ENCODE measurements at regions of chr18 and their contacts with region 1.

Region 1: DNA sequence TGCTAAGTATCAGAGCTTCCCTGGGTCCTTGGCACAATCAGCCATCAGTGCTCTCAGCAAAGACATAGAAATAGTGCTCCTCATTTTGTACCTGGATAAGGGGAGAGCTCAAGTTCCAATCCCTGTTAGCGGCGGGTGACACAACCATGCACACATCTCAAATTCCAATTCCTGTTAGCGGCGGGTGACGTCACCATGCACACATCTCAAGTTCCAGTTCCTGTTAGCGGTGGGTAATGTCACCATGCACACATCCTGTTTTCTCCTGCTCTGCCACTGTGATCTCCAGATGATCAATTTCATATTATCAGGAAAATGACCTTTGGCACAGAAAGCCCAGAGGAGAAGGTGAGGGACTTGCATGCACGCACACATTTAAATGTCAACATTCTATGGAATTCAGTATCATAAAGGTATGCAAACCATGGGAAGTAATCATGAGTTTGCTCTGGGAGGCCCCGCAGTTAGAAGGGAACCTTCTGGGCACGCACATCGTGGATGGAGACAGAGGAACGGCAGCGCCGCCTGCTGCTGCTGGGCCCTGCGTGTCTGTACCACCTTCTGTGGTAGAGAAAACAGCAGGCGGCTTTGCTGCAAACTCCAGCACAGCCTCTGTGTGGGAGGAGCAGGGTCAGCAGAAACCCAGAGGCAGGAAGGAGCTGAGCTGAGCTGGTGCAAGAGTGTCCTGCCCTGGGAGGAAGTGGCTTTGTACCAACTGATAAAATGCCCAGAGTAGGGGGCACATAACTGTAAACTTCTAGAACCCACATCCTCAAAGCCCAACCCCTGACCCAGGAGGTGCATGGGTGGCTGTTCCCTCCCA is 77.8 kb downstream of the MBP start:
- DNase-seq: peak; percentile 73 to 85
- ATAC-seq: peak; percentile 66 to 69
- H3K4me3 ChIP-seq: peak overlapping the region in 1 of 4 donors; percentile 33
- H3K27ac ChIP-seq: peak overlapping the region; percentile 81 to 90 (median 84)
- H3K4me1 ChIP-seq: peaks cover 63 to 64% of the 10 kb centered on the region in 2 donors
- H3K27me3 ChIP-seq: no peaks in the 10 kb centered on the region
- CTCF ChIP-seq: peak; percentile 70 to 83 (median 78)
- POLR2A ChIP-seq: peak in 1 of 2 donors; percentile 13

Region 2: DNA sequence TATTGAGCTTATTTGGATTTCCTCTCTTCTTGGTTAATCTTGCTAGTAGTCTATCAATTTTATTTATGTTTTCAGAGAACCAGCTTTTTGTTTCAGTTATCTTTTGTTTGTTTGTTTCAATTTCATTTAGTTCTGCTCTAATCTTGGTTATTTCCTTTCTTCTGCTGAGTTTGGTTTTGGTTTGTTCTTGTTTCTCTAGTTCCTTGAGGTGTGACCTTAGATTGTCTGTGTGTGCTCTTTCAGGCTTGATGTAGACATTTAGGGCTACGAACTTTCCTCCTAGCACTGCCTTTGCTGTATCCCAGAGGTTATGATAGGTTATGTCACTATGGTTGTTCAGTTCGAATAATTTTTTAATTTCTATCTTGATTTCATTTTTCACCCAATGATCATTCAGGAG is 90.9 kb before region 1 on chr18:
- in situ Hi-C with region 1: no loop called
- intact Hi-C with region 1: no loop called
- DNase-seq: no peak
- ATAC-seq: no peak
- H3K4me3 ChIP-seq: no peak overlapping the region
- H3K27ac ChIP-seq: no peak overlapping the region
- H3K4me1 ChIP-seq: no peaks in the 10 kb centered on the region
- H3K27me3 ChIP-seq: no peaks in the 10 kb centered on the region
- CTCF ChIP-seq: no peak
- POLR2A ChIP-seq: no peak

Region 3: GRCh38 chr18:77000527-77000926 is 54.3 kb before region 1 on chr18:
- in situ Hi-C with region 1: loop called in 3 of 4 experiments (anchors 5 to 10 kb)
- intact Hi-C with region 1: loop called (anchors 1 kb)
- DNase-seq: peak in 1 of 2 donors; percentile 56
- ATAC-seq: peak; percentile 35 to 37
- H3K4me3 ChIP-seq: peak overlapping the region in 2 of 4 donors; percentile 4 to 19
- H3K27ac ChIP-seq: peak overlapping the region in 1 of 4 donors; percentile 50
- H3K4me1 ChIP-seq: peaks cover 0 to 5% of the 10 kb centered on the region in 2 donors
- H3K27me3 ChIP-seq: no peaks in the 10 kb centered on the region
- CTCF ChIP-seq: peak; percentile 92 to 99 (median 95)
- POLR2A ChIP-seq: no peak

Region 4: DNA sequence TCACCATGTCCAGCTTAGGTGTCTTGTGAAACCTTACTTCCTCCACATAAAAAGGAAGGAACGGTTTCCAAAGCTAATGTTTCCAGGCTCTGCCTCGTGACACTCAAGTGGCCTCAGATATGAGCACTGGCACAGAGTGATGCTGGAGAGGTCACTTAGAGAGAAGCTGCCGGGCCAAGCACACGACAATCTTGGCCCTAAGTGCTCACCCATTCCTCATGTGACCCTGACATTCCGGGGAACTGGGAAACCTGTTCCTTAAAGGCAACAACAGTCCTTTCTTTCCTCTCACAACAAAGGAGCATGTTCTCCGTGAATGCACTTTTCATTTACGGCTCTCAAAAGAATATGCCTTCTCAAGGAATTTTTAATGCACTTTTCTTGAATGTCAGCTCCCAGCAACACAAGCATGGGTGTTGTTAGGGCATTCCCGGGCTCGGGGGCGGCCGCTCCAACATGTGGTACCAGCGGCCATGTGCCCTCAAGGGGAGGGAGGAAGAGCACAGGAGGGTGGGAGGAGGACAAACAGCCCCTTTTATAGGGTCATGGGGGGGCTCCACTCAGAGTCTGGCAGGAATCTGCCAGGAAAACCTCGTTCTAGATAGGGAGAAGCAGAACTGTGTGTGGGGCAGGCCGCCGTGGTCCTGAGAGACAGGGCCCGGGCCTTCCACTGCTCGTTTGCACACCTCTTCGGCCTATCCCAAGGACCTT is 40.9 kb before region 1 on chr18:
- in situ Hi-C with region 1: loop called in 2 of 4 experiments (anchors 5 to 10 kb)
- intact Hi-C with region 1: loop called (anchors 2 kb)
- DNase-seq: peak; percentile 92 to 94
- ATAC-seq: peak; percentile 97 to 98
- H3K4me3 ChIP-seq: peak overlapping the region; percentile 12 to 38 (median 30)
- H3K27ac ChIP-seq: peak overlapping the region; percentile 84 to 95 (median 90)
- H3K4me1 ChIP-seq: peaks cover 32 to 33% of the 10 kb centered on the region in 2 donors
- H3K27me3 ChIP-seq: no peaks in the 10 kb centered on the region
- CTCF ChIP-seq: peak in 1 of 5 experiments; percentile 14
- POLR2A ChIP-seq: peak in 1 of 2 donors; percentile 51

Region 5: GRCh38 chr18:77023102-77023782 is 31.6 kb before region 1 on chr18:
- in situ Hi-C with region 1: no loop called
- intact Hi-C with region 1: loop called (anchors 2 kb)
- DNase-seq: peak; percentile 67 to 75
- ATAC-seq: peak; percentile 98 to 99
- H3K4me3 ChIP-seq: peak overlapping the region in 1 of 4 donors; percentile 23
- H3K27ac ChIP-seq: peak overlapping the region; percentile 74 to 87 (median 78)
- H3K4me1 ChIP-seq: peaks cover 17 to 19% of the 10 kb centered on the region in 2 donors
- H3K27me3 ChIP-seq: no peaks in the 10 kb centered on the region
- CTCF ChIP-seq: no peak
- POLR2A ChIP-seq: no peak

Region 6: GRCh38 chr18:77147418-77147852 is 92.6 kb after region 1 on chr18:
- in situ Hi-C with region 1: no loop called
- intact Hi-C with region 1: no loop called
- DNase-seq: no peak
- ATAC-seq: no peak
- H3K4me3 ChIP-seq: no peak overlapping the region
- H3K27ac ChIP-seq: no peak overlapping the region
- H3K4me1 ChIP-seq: no peaks in the 10 kb centered on the region
- H3K27me3 ChIP-seq: no peaks in the 10 kb centered on the region
- CTCF ChIP-seq: no peak
- POLR2A ChIP-seq: no peak

Measured in gastrocnemius medialis (tissue), 4 donors.